ENCODE measurements at regions of chr11 and their contacts with region 1.

Region 1: DNA sequence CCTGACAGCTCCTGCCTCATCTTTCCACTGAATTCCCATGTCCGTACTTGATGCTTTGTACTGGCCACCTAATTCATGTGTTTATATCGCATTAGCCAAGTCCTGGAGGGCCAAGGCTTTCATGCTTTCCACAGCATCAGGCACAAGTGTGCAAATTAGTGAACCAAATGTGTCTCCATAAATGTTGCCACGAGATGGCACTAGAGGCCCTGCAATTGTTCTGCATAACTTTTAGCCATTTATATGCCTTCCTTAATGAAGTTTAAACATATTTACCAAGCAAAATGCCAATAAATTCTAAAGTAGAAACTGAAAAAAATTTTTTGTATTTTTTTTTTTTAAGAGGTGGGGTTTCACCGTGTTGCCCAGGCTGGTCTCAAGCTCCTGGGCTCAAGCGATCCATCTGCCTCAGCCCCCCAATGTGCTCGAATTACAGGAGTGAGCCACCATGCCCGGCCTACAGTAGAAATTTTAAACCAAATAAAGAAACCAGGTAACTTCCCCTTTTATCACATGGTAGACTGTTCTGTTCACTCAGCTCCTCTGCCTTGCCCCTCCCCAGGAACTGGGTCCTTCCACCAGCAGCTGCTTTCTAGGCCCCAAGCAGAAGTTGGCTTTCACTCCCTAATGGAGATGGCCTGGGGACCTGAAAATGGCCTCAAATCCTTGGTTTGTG is 20.8 kb upstream of the IL18BP start:
- DNase-seq: peak in 6 of 9 donors; percentile 44 to 55 (median 47)
- ATAC-seq: peak; percentile 74
- H3K4me3 ChIP-seq: no peak overlapping the region
- H3K4me3 Mint-ChIP-seq: no peak overlapping the region
- H3K27ac ChIP-seq: no peak overlapping the region
- H3K27ac Mint-ChIP-seq: no peak overlapping the region
- H3K4me1 ChIP-seq: no peaks in the 10 kb centered on the region
- H3K4me1 Mint-ChIP-seq: peaks cover 0 to 7% (median 0%) of the 10 kb centered on the region in 7 donors
- H3K27me3 ChIP-seq: no peaks in the 10 kb centered on the region
- H3K27me3 Mint-ChIP-seq: no peaks in the 10 kb centered on the region

Region 2: GRCh38 chr11:71774603-71775222 is 203.2 kb before region 1 on chr11:
- CTCF ChIA-PET with region 1: no interaction called
- POLR2A ChIA-PET with region 1: no interaction called
- intact Hi-C with region 1: no loop called
- DNase-seq: no peak
- ATAC-seq: no peak
- H3K4me3 ChIP-seq: no peak overlapping the region
- H3K4me3 Mint-ChIP-seq: no peak overlapping the region
- H3K27ac ChIP-seq: no peak overlapping the region
- H3K27ac Mint-ChIP-seq: no peak overlapping the region
- H3K4me1 ChIP-seq: no peaks in the 10 kb centered on the region
- H3K4me1 Mint-ChIP-seq: peaks cover 0 to 4% (median 0%) of the 10 kb centered on the region in 7 donors
- H3K27me3 ChIP-seq: no peaks in the 10 kb centered on the region
- H3K27me3 Mint-ChIP-seq: peaks cover 0 to 7% (median 4%) of the 10 kb centered on the region in 5 donors

Region 3: GRCh38 chr11:71988050-71988449 is 10.2 kb after region 1 on chr11:
- CTCF ChIA-PET with region 1: interaction called, 14 read pairs
- POLR2A ChIA-PET with region 1: no interaction called
- intact Hi-C with region 1: no loop called
- DNase-seq: no peak
- ATAC-seq: no peak
- H3K4me3 ChIP-seq: no peak overlapping the region
- H3K4me3 Mint-ChIP-seq: no peak overlapping the region
- H3K27ac ChIP-seq: no peak overlapping the region
- H3K27ac Mint-ChIP-seq: no peak overlapping the region
- H3K4me1 ChIP-seq: no peaks in the 10 kb centered on the region
- H3K4me1 Mint-ChIP-seq: peaks cover 0 to 14% (median 0%) of the 10 kb centered on the region in 7 donors
- H3K27me3 ChIP-seq: no peaks in the 10 kb centered on the region
- H3K27me3 Mint-ChIP-seq: no peaks in the 10 kb centered on the region

Region 4: GRCh38 chr11:72091005-72091691 is 113.3 kb after region 1 on chr11:
- CTCF ChIA-PET with region 1: interaction called, 7 read pairs
- POLR2A ChIA-PET with region 1: no interaction called
- intact Hi-C with region 1: loop called (anchors 1 kb)
- DNase-seq: peak; percentile 50 to 79 (median 74)
- ATAC-seq: peak; percentile 99
- H3K4me3 ChIP-seq: no peak overlapping the region
- H3K4me3 Mint-ChIP-seq: no peak overlapping the region
- H3K27ac ChIP-seq: peak overlapping the region; percentile 14
- H3K27ac Mint-ChIP-seq: peak overlapping the region in 8 of 9 donors; percentile 18 to 90 (median 64)
- H3K4me1 ChIP-seq: peaks cover 0 to 3% of the 10 kb centered on the region in 2 donors
- H3K4me1 Mint-ChIP-seq: peaks cover 11 to 18% (median 13%) of the 10 kb centered on the region in 7 donors
- H3K27me3 ChIP-seq: no peaks in the 10 kb centered on the region
- H3K27me3 Mint-ChIP-seq: no peaks in the 10 kb centered on the region

Region 5: DNA sequence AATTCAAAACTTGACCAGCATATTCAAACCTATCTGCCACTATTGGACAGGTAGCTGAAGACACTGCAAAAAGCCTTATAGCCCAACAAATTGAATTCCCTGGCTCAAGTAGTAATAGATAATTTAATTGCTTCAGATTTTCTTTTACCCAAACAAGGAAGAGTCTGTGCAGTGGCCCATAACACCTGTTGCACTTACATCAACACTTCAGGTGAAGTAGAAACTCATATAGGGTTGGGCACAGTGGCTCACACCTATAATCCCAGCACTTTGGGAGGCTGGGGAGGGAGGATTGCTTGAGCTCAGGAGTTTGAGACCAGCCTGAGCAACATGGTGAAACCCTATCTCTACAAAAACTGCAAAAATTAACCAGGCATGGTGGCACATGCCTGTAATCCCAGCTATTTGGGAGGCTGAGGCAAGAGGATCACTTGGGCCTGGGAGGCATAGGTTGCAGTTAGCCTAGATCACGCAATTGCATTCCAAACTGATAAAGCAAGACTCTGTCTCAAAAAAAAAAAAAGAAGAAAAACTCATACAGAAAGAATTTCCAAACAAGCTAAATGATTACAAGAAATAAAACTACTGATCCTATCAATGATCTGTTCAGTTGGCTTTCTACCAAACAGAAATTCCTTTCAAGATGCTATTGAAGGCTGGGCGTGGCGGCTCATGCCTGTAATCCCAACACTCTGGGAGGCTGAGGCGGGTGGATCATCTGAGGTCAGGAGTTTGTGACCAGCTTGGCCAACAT is 167.1 kb after region 1 on chr11:
- CTCF ChIA-PET with region 1: interaction called, 43 read pairs
- POLR2A ChIA-PET with region 1: no interaction called
- intact Hi-C with region 1: loop called (anchors 1 kb)
- DNase-seq: no peak
- ATAC-seq: no peak
- H3K4me3 ChIP-seq: no peak overlapping the region
- H3K4me3 Mint-ChIP-seq: no peak overlapping the region
- H3K27ac ChIP-seq: no peak overlapping the region
- H3K27ac Mint-ChIP-seq: no peak overlapping the region
- H3K4me1 ChIP-seq: no peaks in the 10 kb centered on the region
- H3K4me1 Mint-ChIP-seq: peaks cover 0 to 18% (median 3%) of the 10 kb centered on the region in 7 donors
- H3K27me3 ChIP-seq: no peaks in the 10 kb centered on the region
- H3K27me3 Mint-ChIP-seq: peaks cover 1 to 15% (median 4%) of the 10 kb centered on the region in 5 donors

Region 6: DNA sequence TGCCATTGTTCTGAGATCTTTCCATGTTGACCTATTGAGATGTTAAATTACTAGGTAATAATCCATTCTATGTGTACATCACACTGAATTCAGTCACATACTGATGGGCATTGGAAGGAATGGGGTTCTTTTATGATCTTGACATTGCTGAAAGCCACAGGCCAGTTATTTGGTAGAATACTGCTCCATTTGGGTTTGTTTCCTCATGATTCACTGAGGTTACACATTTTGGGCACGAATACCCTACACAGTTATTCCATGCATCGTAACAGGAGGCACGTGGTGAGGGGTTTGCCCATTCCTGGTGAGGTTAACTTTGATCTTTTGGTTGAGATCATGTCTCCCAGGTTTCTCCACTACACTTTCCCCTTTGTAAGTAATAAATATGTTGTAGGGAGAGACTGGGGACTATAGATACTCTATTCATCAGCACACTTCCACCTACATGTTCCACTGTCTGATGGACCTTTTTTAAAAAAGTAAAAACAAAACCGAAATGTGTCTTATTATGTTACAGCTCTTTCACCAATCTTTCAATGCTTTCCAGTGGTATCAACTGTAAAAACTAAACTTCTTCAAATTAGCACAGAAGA is 202.0 kb after region 1 on chr11:
- CTCF ChIA-PET with region 1: interaction called, 5 read pairs
- POLR2A ChIA-PET with region 1: no interaction called
- intact Hi-C with region 1: loop called in 1 of 2 experiments (anchors 1 kb)
- DNase-seq: no peak
- ATAC-seq: no peak
- H3K4me3 ChIP-seq: no peak overlapping the region
- H3K4me3 Mint-ChIP-seq: no peak overlapping the region
- H3K27ac ChIP-seq: no peak overlapping the region
- H3K27ac Mint-ChIP-seq: no peak overlapping the region
- H3K4me1 ChIP-seq: no peaks in the 10 kb centered on the region
- H3K4me1 Mint-ChIP-seq: peaks cover 0 to 5% (median 3%) of the 10 kb centered on the region in 7 donors
- H3K27me3 ChIP-seq: no peaks in the 10 kb centered on the region
- H3K27me3 Mint-ChIP-seq: peaks cover 6 to 24% (median 10%) of the 10 kb centered on the region in 5 donors

Region 7: GRCh38 chr11:72413914-72414628 is 436.2 kb after region 1 on chr11:
- CTCF ChIA-PET with region 1: interaction called, 5 read pairs
- POLR2A ChIA-PET with region 1: no interaction called
- intact Hi-C with region 1: loop called in 1 of 2 experiments (anchors 1 kb)
- DNase-seq: peak; percentile 49 to 79 (median 68)
- ATAC-seq: peak; percentile 79
- H3K4me3 ChIP-seq: no peak overlapping the region
- H3K4me3 Mint-ChIP-seq: no peak overlapping the region
- H3K27ac ChIP-seq: no peak overlapping the region
- H3K27ac Mint-ChIP-seq: peak overlapping the region in 4 of 9 donors; percentile 2 to 50 (median 22)
- H3K4me1 ChIP-seq: peaks cover 0 to 2% of the 10 kb centered on the region in 2 donors
- H3K4me1 Mint-ChIP-seq: peaks cover 17 to 48% (median 39%) of the 10 kb centered on the region in 7 donors
- H3K27me3 ChIP-seq: no peaks in the 10 kb centered on the region
- H3K27me3 Mint-ChIP-seq: no peaks in the 10 kb centered on the region

Region 8: GRCh38 chr11:72446902-72447769 is 469.3 kb after region 1 on chr11:
- CTCF ChIA-PET with region 1: interaction called, 4 read pairs
- POLR2A ChIA-PET with region 1: no interaction called
- intact Hi-C with region 1: loop called in 1 of 2 experiments (anchors 5 kb)
- DNase-seq: peak in 7 of 9 donors; percentile 35 to 60 (median 49)
- ATAC-seq: peak; percentile 91
- H3K4me3 ChIP-seq: no peak overlapping the region
- H3K4me3 Mint-ChIP-seq: no peak overlapping the region
- H3K27ac ChIP-seq: no peak overlapping the region
- H3K27ac Mint-ChIP-seq: no peak overlapping the region
- H3K4me1 ChIP-seq: no peaks in the 10 kb centered on the region
- H3K4me1 Mint-ChIP-seq: peaks cover 0 to 2% (median 0%) of the 10 kb centered on the region in 7 donors
- H3K27me3 ChIP-seq: no peaks in the 10 kb centered on the region
- H3K27me3 Mint-ChIP-seq: peaks cover 4 to 44% (median 8%) of the 10 kb centered on the region in 5 donors

Region 9: GRCh38 chr11:73028611-73029010 is 1050.7 kb after region 1 on chr11:
- CTCF ChIA-PET with region 1: no interaction called
- POLR2A ChIA-PET with region 1: no interaction called
- intact Hi-C with region 1: no loop called
- DNase-seq: no peak
- ATAC-seq: peak; percentile 41
- H3K4me3 ChIP-seq: no peak overlapping the region
- H3K4me3 Mint-ChIP-seq: peak overlapping the region in 2 of 10 donors; percentile 45
- H3K27ac ChIP-seq: no peak overlapping the region
- H3K27ac Mint-ChIP-seq: no peak overlapping the region
- H3K4me1 ChIP-seq: peaks cover 0 to 6% of the 10 kb centered on the region in 2 donors
- H3K4me1 Mint-ChIP-seq: peaks cover 12 to 50% (median 40%) of the 10 kb centered on the region in 7 donors
- H3K27me3 ChIP-seq: no peaks in the 10 kb centered on the region
- H3K27me3 Mint-ChIP-seq: no peaks in the 10 kb centered on the region